T-cell (primary cell): ENCODE measurements at regions of chrX and their contacts with region 1.

Region 1: DNA sequence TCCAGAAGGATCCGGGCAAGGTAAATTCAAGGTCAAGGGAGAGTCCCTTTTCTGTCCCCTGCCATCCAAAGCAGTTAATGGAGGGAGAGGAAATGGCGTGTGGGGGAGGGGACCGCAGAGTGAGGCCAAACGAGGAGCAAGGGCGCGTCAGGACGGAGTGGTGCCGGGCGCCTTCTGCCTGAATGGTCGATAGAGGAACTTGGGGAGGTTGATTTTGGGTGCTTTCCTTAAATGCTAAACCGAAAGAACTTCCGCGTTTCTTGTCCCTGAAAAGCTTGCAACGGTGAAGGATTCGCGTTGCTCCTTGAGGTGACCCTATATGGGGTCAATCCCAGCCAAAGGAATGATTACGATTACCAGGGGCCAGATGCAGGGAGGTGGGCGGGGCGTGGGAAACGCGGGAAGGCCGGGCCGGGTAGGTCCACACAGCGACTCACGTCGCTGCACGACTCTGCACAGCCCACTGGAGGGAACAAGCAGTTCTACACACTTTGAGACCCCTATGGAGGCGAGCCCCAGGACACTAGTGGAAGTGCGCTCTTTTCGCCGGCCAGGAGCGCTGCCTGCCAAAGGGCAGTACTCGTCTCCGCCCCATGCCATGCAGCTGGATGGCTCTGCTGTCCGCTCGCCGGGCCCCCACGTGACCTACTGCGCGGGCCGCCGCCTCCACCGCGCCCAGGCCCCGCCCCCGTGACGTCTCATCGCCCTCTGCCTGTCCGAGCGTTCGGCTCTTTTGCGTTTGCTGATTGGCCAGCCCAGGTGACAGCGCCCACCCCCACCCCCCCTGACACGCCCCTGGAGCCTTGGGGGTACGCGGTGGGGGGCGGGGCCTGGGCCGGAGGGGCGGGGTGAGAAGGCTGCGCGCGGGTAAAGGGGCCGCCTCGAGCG is 452 bp upstream of the GK start:
- DNase-seq: peak; percentile 74 to 92 (median 85)
- ATAC-seq: peak; percentile 89 to 93 (median 91)
- H3K4me3 ChIP-seq: peak overlapping the region; percentile 79 to 84
- H3K4me3 Mint-ChIP-seq: peak overlapping the region; percentile 85 to 88 (median 86)
- H3K27ac ChIP-seq: peak overlapping the region; percentile 72
- H3K27ac Mint-ChIP-seq: peak overlapping the region; percentile 85 to 90
- H3K4me1 ChIP-seq: peaks cover 0 to 12% of the 10 kb centered on the region in 2 experiments
- H3K4me1 Mint-ChIP-seq: peaks cover 5 to 40% (median 33%) of the 10 kb centered on the region in 3 donors
- H3K27me3 ChIP-seq: no peaks in the 10 kb centered on the region
- H3K27me3 Mint-ChIP-seq: no peaks in the 10 kb centered on the region

Region 2: GRCh38 chrX:30702736-30703135 is 50.0 kb after region 1 on chrX:
- CTCF ChIA-PET with region 1: no interaction called
- POLR2A ChIA-PET with region 1: no interaction called
- DNase-seq: no peak
- ATAC-seq: no peak
- H3K4me3 ChIP-seq: no peak overlapping the region
- H3K4me3 Mint-ChIP-seq: no peak overlapping the region
- H3K27ac ChIP-seq: no peak overlapping the region
- H3K27ac Mint-ChIP-seq: no peak overlapping the region
- H3K4me1 ChIP-seq: no peaks in the 10 kb centered on the region
- H3K4me1 Mint-ChIP-seq: no peaks in the 10 kb centered on the region
- H3K27me3 ChIP-seq: no peaks in the 10 kb centered on the region
- H3K27me3 Mint-ChIP-seq: no peaks in the 10 kb centered on the region

Region 3: DNA sequence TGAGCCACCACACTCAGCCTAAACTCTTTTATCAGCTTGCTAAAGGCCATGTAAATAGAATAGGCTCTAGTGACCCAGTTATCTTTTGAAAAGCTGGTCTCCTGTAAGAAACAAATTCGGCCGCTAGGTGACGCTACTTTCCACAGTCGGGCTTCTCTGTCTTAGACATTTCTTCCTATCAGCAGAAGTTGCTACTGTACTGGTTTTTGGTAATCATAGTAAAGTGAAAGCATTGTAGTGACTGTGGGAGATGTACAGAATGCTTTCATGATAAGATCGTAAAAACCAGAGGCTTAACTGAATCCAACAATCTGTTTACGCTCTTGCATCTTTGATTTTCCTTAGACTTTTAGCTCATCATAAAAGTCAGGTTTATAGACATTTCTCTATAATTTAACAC is 83.1 kb after region 1 on chrX:
- CTCF ChIA-PET with region 1: interaction called in 1 of 2 experiments, 12 read pairs
- POLR2A ChIA-PET with region 1: no interaction called
- DNase-seq: peak; percentile 20 to 74 (median 54)
- ATAC-seq: peak; percentile 68 to 91 (median 74)
- H3K4me3 ChIP-seq: no peak overlapping the region
- H3K4me3 Mint-ChIP-seq: no peak overlapping the region
- H3K27ac ChIP-seq: no peak overlapping the region
- H3K27ac Mint-ChIP-seq: no peak overlapping the region
- H3K4me1 ChIP-seq: no peaks in the 10 kb centered on the region
- H3K4me1 Mint-ChIP-seq: peaks cover 0 to 2% (median 0%) of the 10 kb centered on the region in 3 donors
- H3K27me3 ChIP-seq: no peaks in the 10 kb centered on the region
- H3K27me3 Mint-ChIP-seq: no peaks in the 10 kb centered on the region